Activated T-helper 1 cell treated with anti-CD3 and anti-CD28 coated beads, Interleukin-12 subunit alpha, Interleukin-12 subunit beta, Interleukin-2, Interleukin-4 antibody, amounts not matched to agents 30 ng/mL and 10 ng/mL and 1 ng/mL, durations not matched to agents 14 hours and 24 hours and 36 hours (primary cell): ENCODE measurements at regions of chr19 and their contacts with region 1.

Region 1: GRCh38 chr19:17390665-17391370 is 3.2 kb downstream of the CCDC194 start:
- DNase-seq: peak; percentile 88
- H3K4me3 Mint-ChIP-seq: peak overlapping the region; percentile 90
- H3K27ac Mint-ChIP-seq: peak overlapping the region; percentile 29
- H3K4me1 Mint-ChIP-seq: peaks cover 20% of the 10 kb centered on the region
- H3K27me3 Mint-ChIP-seq: peaks cover 21% of the 10 kb centered on the region

Region 2: GRCh38 chr19:17069218-17069617 is 321.6 kb before region 1 on chr19:
- intact Hi-C with region 1: loop called (anchors 10 kb)
- DNase-seq: no peak
- H3K4me3 Mint-ChIP-seq: no peak overlapping the region
- H3K27ac Mint-ChIP-seq: no peak overlapping the region
- H3K4me1 Mint-ChIP-seq: peaks cover 50% of the 10 kb centered on the region
- H3K27me3 Mint-ChIP-seq: no peaks in the 10 kb centered on the region

Region 3: DNA sequence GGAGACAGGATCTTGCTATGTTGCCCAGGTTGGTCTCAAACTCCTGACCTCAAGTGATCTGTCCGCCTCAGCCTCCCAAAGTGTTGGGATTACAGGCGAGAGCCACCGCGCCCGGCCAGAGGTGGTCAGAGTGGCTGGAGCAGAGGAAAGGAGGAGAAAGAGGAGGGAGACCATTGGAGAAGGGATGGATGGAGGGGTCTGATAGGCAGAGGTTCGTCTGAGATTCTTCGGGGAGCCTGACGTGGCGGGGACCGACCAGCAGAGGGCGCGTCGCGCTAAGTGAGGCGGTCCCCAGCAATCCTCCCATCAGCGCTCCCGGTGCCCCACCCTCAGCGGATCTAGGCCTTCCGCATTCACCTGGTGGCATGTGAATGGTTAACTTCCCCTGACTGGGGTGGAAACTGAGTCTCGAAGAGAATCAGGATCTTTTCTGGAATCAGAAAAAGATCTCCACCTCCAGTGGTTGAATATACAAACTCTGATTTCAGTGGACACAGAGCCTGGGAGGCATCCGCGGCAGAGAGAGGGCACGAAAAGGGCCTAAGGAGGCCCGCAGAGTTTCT is 44.6 kb before region 1 on chr19:
- intact Hi-C with region 1: loop called (anchors 1 kb)
- DNase-seq: peak; percentile 71
- H3K4me3 Mint-ChIP-seq: no peak overlapping the region
- H3K27ac Mint-ChIP-seq: no peak overlapping the region
- H3K4me1 Mint-ChIP-seq: peaks cover 9% of the 10 kb centered on the region
- H3K27me3 Mint-ChIP-seq: peaks cover 9% of the 10 kb centered on the region

Region 4: GRCh38 chr19:17419621-17420466 is 29.0 kb after region 1 on chr19 and contains the start of gene MVB12A:
- intact Hi-C with region 1: loop called (anchors 1 kb)
- DNase-seq: peak; percentile 95
- H3K4me3 Mint-ChIP-seq: peak within 1 kb of the TSS; percentile 94
- H3K27ac Mint-ChIP-seq: peak within 1 kb of the TSS; percentile 94
- H3K4me1 Mint-ChIP-seq: peaks cover 17% of the 10 kb centered on the region
- H3K27me3 Mint-ChIP-seq: no peaks in the 10 kb centered on the region
- total RNA-seq, gene MVB12A: 40.8 and 42.7 TPM in 2 replicates